Endothelial cell of umbilical vein (primary cell): ENCODE measurements at regions of chr20 and their contacts with region 1.

Region 1: DNA sequence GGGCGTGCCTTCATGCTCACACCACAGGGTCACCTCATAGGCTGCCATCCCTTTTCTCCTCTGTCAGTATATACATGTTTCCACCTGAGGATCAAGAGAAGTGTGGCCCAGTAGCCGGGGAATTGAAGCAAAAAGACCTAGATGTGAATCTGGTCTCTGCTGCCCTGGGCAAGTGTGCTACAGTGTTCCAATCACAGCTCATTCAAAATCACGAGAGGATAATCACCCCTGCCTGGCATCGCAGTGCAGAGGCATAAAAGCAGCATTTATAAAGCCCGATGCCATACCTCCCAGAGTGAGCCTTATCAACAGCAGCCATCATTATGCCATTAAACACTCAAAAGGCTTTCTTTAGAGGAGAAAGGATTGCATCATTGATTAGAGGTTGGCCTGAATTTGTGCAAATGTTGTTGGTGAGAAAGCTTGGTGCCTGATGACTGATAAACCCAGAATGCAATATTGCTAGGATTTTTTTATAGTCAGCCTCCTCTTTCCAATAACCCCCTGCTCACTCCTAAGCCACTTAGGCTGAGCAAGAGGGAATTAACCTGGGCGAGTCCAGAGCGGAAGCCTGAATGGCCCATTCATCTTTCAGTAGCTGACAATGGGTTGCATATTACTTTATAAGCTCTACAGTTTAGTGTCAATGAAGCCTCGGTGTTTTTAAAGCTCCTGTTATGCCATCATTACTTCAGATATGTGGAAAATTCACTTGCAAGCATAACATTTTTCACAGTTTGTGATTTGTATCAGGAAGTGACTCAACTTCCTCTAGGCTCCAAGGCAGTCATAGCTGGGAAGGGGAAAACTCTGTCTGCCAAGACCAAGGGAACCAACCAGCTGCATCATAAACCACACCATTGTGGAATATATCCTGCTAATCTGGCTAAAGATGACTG is 92.5 kb upstream of the NXT1 start:
- DNase-seq: peak; percentile 97
- H3K4me3 ChIP-seq: no peak overlapping the region
- H3K27ac ChIP-seq: peak overlapping the region; percentile 98
- H3K4me1 ChIP-seq: peaks cover 39% of the 10 kb centered on the region
- H3K27me3 ChIP-seq: no peaks in the 10 kb centered on the region
- CTCF ChIP-seq: no peak
- POLR2A ChIP-seq: peak; percentile 25

Region 2: GRCh38 chr20:22795871-22796270 is 462.2 kb before region 1 on chr20:
- CTCF ChIA-PET with region 1: no interaction called
- POLR2A ChIA-PET with region 1: no interaction called
- dilution Hi-C with region 1: no loop called
- intact Hi-C with region 1: loop called (anchors 1 kb)
- DNase-seq: peak; percentile 98
- H3K4me3 ChIP-seq: no peak overlapping the region
- H3K27ac ChIP-seq: peak overlapping the region; percentile 100
- H3K4me1 ChIP-seq: peaks cover 43% of the 10 kb centered on the region
- H3K27me3 ChIP-seq: no peaks in the 10 kb centered on the region
- CTCF ChIP-seq: no peak
- POLR2A ChIP-seq: peak; percentile 50

Region 3: DNA sequence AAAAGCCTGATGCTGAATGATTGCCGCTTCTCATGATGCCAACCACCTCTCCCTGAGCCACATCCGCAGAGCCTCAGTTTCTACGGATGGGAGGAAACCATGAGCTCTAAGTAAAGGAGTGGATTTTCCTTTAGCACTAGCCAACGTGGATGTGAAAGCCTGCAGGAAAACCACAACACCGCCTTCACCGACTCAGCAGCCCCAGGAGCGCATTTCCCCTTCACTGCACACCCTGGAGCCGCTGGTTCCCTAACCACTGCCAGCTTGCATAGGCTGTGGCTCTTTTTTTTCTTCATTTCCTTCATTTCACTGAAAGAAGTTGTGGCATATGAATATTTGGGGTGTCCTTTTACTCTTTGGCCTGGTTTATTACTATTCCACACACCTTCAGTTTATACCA is 273.5 kb before region 1 on chr20:
- CTCF ChIA-PET with region 1: no interaction called
- POLR2A ChIA-PET with region 1: no interaction called
- dilution Hi-C with region 1: no loop called
- intact Hi-C with region 1: no loop called
- DNase-seq: no peak
- H3K4me3 ChIP-seq: no peak overlapping the region
- H3K27ac ChIP-seq: no peak overlapping the region
- H3K4me1 ChIP-seq: no peaks in the 10 kb centered on the region
- H3K27me3 ChIP-seq: peaks cover 6 to 8% of the 10 kb centered on the region in 2 experiments
- CTCF ChIP-seq: no peak
- POLR2A ChIP-seq: no peak

Region 4: GRCh38 chr20:23106261-23106851 is 151.7 kb before region 1 on chr20:
- CTCF ChIA-PET with region 1: interaction called, 7 read pairs
- POLR2A ChIA-PET with region 1: no interaction called
- dilution Hi-C with region 1: no loop called
- intact Hi-C with region 1: loop called (anchors 2 kb)
- DNase-seq: peak; percentile 93
- H3K4me3 ChIP-seq: no peak overlapping the region
- H3K27ac ChIP-seq: peak overlapping the region; percentile 70
- H3K4me1 ChIP-seq: peaks cover 52% of the 10 kb centered on the region
- H3K27me3 ChIP-seq: no peaks in the 10 kb centered on the region
- CTCF ChIP-seq: peak; percentile 27 to 39
- POLR2A ChIP-seq: peak; percentile 17

Region 5: GRCh38 chr20:23245553-23246181 is 12.4 kb before region 1 on chr20:
- CTCF ChIA-PET with region 1: interaction called, 48 read pairs
- POLR2A ChIA-PET with region 1: interaction called, 5 read pairs
- dilution Hi-C with region 1: no loop called
- intact Hi-C with region 1: no loop called
- DNase-seq: peak; percentile 77
- H3K4me3 ChIP-seq: no peak overlapping the region
- H3K27ac ChIP-seq: no peak overlapping the region
- H3K4me1 ChIP-seq: no peaks in the 10 kb centered on the region
- H3K27me3 ChIP-seq: no peaks in the 10 kb centered on the region
- CTCF ChIP-seq: peak; percentile 67 to 88
- POLR2A ChIP-seq: no peak

Region 6: DNA sequence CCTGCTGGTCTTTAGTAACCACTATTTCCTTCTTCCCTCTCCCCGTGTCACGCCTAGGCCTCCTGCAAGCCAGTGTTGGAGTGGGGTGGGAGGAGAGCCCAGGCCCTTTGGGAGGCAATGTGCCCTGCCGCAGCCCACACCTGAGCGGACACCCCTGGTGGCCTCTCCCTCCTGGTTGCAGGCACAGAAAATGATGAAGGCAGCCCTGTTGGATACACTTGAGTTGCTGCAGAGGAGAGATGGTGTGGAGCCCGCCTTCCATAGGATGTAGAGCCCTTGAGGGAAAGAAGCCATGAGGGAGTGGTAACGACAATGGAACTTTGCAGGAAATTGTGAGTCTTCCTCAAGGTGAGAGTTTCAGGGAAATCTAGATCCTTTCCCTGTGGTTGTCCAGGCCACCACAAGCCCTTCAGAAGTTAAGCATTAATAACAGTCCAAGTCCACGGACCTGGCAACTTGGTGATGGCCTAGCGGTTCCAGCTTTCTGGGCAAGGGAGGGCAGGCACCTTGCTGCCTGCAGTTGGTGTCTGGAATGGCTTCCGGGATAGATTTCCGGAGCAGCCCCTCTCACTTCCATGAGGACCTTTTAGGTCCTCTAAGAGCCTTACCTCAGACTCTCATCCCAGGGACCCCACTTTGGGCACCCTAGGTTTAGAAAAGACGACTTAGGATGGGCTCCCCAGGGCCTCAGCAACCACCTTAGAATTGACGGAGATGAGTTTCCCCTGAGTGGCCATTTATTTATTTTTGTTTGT is 25.2 kb after region 1 on chr20:
- CTCF ChIA-PET with region 1: interaction called, 13 read pairs
- POLR2A ChIA-PET with region 1: no interaction called
- dilution Hi-C with region 1: no loop called
- intact Hi-C with region 1: loop called (anchors 1 kb)
- DNase-seq: no peak
- H3K4me3 ChIP-seq: no peak overlapping the region
- H3K27ac ChIP-seq: no peak overlapping the region
- H3K4me1 ChIP-seq: peaks cover 9% of the 10 kb centered on the region
- H3K27me3 ChIP-seq: no peaks in the 10 kb centered on the region
- CTCF ChIP-seq: no peak
- POLR2A ChIP-seq: no peak

Region 7: DNA sequence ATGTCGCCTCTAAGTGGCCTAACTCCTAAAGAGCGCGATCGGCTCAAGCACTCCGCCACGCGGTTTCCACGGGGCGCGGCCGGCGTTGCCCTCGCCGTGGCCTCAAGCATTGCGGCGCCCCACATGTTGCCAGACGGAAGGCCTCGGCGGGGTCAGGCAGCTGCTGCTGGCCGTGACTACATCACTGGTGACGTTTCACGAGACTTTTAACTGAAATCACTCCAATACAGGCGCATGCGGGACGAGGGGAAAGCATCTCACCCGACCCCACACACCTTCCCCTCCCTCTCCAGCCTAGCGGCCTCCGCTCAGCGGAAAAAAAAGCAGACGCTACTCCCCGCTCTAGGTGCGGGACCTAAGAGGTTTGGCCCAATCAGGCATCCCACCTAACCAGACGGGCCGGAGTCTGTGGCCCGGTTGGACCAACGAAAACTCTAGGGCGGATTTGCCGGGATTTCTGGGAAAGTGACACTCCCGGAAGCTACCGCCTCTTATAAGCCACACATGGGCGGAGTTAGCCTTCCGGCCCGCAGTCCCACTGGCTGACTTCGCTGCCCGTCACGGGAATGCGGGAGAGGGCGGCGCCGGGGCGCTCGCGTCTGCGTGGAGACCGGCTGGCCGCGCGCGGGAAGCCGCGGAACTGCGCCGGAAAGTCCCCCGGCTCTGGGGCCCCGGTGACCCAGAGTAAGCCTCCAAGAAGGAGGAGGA is 92.3 kb after region 1 on chr20 and contains the start of gene NXT1:
- CTCF ChIA-PET with region 1: interaction called, 11 read pairs
- POLR2A ChIA-PET with region 1: interaction called, 5 read pairs
- dilution Hi-C with region 1: no loop called
- intact Hi-C with region 1: loop called (anchors 2 kb)
- DNase-seq: peak; percentile 98
- H3K4me3 ChIP-seq: peak within 1 kb of the TSS; percentile 20 to 79 (median 77)
- H3K27ac ChIP-seq: peak within 1 kb of the TSS; percentile 94
- H3K4me1 ChIP-seq: peaks cover 19% of the 10 kb centered on the region
- H3K27me3 ChIP-seq: no peaks in the 10 kb centered on the region
- CTCF ChIP-seq: no peak
- POLR2A ChIP-seq: peak; percentile 19
- total RNA-seq, gene NXT1: 27.1 and 28.5 TPM in 2 replicates

Region 8: DNA sequence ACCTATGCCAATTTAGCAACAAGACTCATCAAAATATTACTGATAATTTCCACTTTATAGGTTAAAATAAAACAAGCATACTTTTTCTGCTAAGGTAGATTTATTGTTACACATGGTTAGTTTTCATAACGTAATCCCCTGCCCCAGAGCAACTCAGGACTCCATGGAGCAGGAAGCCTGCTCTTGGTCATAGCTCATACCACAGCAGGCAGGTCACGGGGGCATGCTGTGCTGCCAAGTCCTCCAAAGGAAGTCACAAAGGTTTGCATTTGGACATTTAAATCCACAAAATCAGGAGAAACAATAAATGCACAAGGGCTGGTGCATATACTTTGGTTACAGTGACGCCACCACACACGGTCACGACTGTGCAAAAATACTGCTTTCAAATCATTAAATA is 116.3 kb after region 1 on chr20:
- CTCF ChIA-PET with region 1: no interaction called
- POLR2A ChIA-PET with region 1: no interaction called
- dilution Hi-C with region 1: no loop called
- intact Hi-C with region 1: no loop called
- DNase-seq: peak; percentile 76
- H3K4me3 ChIP-seq: no peak overlapping the region
- H3K27ac ChIP-seq: peak overlapping the region; percentile 23
- H3K4me1 ChIP-seq: peaks cover 13% of the 10 kb centered on the region
- H3K27me3 ChIP-seq: no peaks in the 10 kb centered on the region
- CTCF ChIP-seq: no peak
- POLR2A ChIP-seq: no peak

Region 9: DNA sequence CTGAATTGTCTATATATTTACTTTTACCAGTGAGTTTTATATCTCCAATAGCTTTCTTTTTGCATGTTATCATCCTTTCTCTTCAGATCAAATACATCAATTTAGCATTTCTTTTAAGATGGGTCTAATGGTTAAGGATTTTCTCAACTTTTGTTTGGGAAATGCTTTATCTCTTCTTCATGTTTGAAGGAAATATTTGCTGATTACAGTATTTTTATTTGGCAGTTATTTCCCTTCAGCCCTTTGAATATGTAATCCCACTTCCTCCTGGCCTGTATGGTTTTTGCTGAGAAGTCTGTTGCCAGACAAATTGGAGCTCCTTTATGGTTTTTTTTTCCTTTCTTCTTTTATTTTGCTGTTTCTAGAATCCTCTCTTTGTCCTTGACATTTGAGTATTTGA is 316.9 kb after region 1 on chr20:
- CTCF ChIA-PET with region 1: no interaction called
- POLR2A ChIA-PET with region 1: no interaction called
- dilution Hi-C with region 1: no loop called
- intact Hi-C with region 1: no loop called
- DNase-seq: no peak
- H3K4me3 ChIP-seq: no peak overlapping the region
- H3K27ac ChIP-seq: no peak overlapping the region
- H3K4me1 ChIP-seq: no peaks in the 10 kb centered on the region
- H3K27me3 ChIP-seq: peaks cover 0 to 1% of the 10 kb centered on the region in 2 experiments
- CTCF ChIP-seq: no peak
- POLR2A ChIP-seq: no peak